Astrocyte of the cerebellum (primary cell): ENCODE measurements at regions of chr10 and their contacts with region 1.

Region 1: GRCh38 chr10:92929896-92930295 is 81.6 kb downstream of the EXOC6 start:
- DNase-seq: no peak
- H3K4me3 ChIP-seq: no peak overlapping the region
- CTCF ChIP-seq: no peak

Region 2: DNA sequence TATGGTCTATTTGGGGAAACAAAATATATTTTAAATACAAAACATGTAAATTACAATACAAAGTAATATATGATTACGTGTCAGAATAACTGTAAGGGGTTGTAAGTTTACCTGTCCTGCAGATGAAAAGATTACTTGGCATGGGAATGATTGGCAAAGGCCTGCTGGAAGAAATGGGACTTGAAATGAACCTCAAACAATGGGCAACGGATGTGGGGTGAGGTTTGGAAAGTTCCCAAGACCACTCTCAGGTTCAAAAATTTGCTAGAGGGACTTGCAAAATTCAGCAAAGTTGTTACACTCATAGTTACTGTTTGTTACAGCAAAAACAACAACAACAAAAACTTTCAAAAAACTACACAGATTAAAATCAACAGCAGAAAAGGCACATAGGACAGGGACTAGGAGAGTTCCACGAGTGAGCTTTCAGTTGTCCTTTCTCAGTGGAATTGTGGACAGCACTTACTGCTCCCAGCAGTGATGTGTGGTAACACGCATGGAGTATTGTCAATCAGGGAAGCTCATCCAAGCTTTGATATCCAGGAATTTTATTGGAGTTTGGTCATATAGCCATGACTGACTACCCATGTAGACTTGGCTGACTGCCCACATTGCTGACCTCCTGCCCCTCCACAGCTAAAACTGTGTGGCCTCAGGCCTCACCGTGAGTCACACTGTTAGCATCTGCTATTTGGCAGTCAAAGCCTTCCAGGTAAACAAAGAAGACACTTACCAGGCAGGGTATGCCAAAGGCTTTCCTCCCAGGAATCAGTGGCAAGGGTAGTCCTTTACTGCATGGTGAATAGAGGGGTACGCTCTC is 37.8 kb before region 1 on chr10:
- in situ Hi-C with region 1: loop called (anchors 5 kb)
- DNase-seq: peak; percentile 59
- H3K4me3 ChIP-seq: no peak overlapping the region
- CTCF ChIP-seq: no peak